SK-N-SH (cell line): ENCODE measurements at regions of chr3 and their contacts with region 1.

Region 1: GRCh38 chr3:36714343-36715086 is 49.8 kb downstream of the DCLK3 start:
- DNase-seq: no peak
- H3K4me3 ChIP-seq: no peak overlapping the region
- H3K27ac ChIP-seq: no peak overlapping the region
- H3K4me1 ChIP-seq: no peaks in the 10 kb centered on the region; a peak in 1 of 4 replicates
- H3K27me3 ChIP-seq: no peaks in the 10 kb centered on the region
- CTCF ChIP-seq: peak; percentile 42; the same call in 1 of the 2 replicates
- EP300 ChIP-seq: no peak
- RAD21 ChIP-seq: no peak

Region 2: GRCh38 chr3:36700537-36701248 is 13.8 kb before region 1 on chr3:
- CTCF ChIA-PET with region 1: interaction called, 12 read pairs
- POLR2A ChIA-PET with region 1: no interaction called
- DNase-seq: peak; percentile 73
- H3K4me3 ChIP-seq: peak overlapping the region in 1 of 2 experiments; percentile 25; a peak in 1 of 4 replicates
- H3K27ac ChIP-seq: peak overlapping the region in 1 of 2 experiments; percentile 55; a peak in 1 of 4 replicates
- H3K4me1 ChIP-seq: peaks cover 0 to 21% of the 10 kb centered on the region in 2 experiments; a peak in 3 of 4 replicates
- H3K27me3 ChIP-seq: no peaks in the 10 kb centered on the region
- CTCF ChIP-seq: peak; percentile 97
- EP300 ChIP-seq: no peak; a peak in 1 of 4 replicates
- RAD21 ChIP-seq: peak; percentile 100